Keratinocyte (primary cell): ENCODE measurements at regions of chr4 and their contacts with region 1.

Region 1: DNA sequence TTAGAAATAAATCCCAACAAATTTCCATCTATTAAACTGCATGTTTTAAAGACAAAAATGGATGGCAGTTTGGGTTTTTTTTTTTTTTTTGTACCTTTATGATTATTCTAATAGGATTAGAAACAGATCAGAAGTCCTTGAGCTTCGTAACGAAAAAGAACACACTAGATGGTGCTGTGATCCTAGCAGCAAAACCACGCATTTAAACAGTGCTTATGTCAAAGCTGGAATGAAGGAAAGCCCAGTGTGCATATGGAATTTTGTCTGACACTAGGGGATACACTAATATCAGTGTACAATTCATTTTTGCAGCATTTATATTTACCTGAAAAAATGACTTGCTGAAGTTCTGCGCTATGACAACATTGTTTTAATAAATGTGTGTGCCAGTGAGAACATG is 229.1 kb downstream of the VEGFC start:
- DNase-seq: no peak
- H3K4me3 ChIP-seq: no peak overlapping the region
- H3K27ac ChIP-seq: no peak overlapping the region
- H3K4me1 ChIP-seq: no peaks in the 10 kb centered on the region
- H3K27me3 ChIP-seq: no peaks in the 10 kb centered on the region
- CTCF ChIP-seq: peak in 2 of 3 experiments; percentile 2 to 29

Region 2: DNA sequence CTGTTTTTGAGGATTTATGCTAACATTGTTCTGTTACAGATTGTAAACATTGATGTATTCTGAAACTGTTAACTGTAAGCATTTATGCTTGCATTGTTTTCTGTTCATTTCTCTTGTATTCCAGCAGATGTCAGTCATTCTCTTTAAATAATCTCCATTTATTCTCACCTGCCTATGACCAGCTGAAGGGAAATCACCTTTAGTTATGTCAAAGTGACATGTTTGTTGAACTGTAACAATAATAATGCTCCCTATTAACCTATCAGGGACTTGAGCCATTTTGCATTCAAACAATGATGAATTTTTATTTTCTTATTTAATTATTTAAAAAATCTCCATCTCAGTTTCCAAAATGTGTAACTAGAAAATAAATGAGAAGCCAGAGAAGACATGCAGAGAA is 185.8 kb before region 1 on chr4:
- dilution Hi-C with region 1: loop called (anchors 25 kb)
- DNase-seq: no peak
- H3K4me3 ChIP-seq: no peak overlapping the region
- H3K27ac ChIP-seq: no peak overlapping the region
- H3K4me1 ChIP-seq: no peaks in the 10 kb centered on the region
- H3K27me3 ChIP-seq: no peaks in the 10 kb centered on the region
- CTCF ChIP-seq: peak in 2 of 3 experiments; percentile 36 to 55

Region 3: GRCh38 chr4:176443117-176443516 is 120.5 kb before region 1 on chr4:
- dilution Hi-C with region 1: no loop called
- DNase-seq: no peak
- H3K4me3 ChIP-seq: no peak overlapping the region
- H3K27ac ChIP-seq: peak overlapping the region; percentile 67
- H3K4me1 ChIP-seq: peaks cover 33% of the 10 kb centered on the region
- H3K27me3 ChIP-seq: no peaks in the 10 kb centered on the region
- CTCF ChIP-seq: no peak

Region 4: GRCh38 chr4:176708771-176709311 is 145.2 kb after region 1 on chr4:
- dilution Hi-C with region 1: no loop called
- DNase-seq: no peak
- H3K4me3 ChIP-seq: no peak overlapping the region
- H3K27ac ChIP-seq: peak overlapping the region; percentile 55
- H3K4me1 ChIP-seq: peaks cover 28% of the 10 kb centered on the region
- H3K27me3 ChIP-seq: no peaks in the 10 kb centered on the region
- CTCF ChIP-seq: no peak